HCT116 (cell line): ENCODE measurements at regions of chr2 and their contacts with region 1.

Region 1: GRCh38 chr2:17672583-17673317 is 80.9 kb downstream of the SMC6 start:
- DNase-seq: no peak
- ATAC-seq: peak; percentile 59; the same call in 1 of the 2 replicates
- H3K4me3 ChIP-seq: no peak overlapping the region
- H3K27ac ChIP-seq: no peak overlapping the region
- H3K4me1 ChIP-seq: 0 out of 4 replicates have a peak, but pooled peaks cover 0 to 3% of the 10 kb centered on the region in 2 experiments
- H3K27me3 ChIP-seq: no peaks in the 10 kb centered on the region
- CTCF ChIP-seq: peak in 1 of 3 experiments; percentile 12; a peak in 1 of 6 replicates
- POLR2A ChIP-seq: no peak
- RAD21 ChIP-seq: no peak

Region 2: DNA sequence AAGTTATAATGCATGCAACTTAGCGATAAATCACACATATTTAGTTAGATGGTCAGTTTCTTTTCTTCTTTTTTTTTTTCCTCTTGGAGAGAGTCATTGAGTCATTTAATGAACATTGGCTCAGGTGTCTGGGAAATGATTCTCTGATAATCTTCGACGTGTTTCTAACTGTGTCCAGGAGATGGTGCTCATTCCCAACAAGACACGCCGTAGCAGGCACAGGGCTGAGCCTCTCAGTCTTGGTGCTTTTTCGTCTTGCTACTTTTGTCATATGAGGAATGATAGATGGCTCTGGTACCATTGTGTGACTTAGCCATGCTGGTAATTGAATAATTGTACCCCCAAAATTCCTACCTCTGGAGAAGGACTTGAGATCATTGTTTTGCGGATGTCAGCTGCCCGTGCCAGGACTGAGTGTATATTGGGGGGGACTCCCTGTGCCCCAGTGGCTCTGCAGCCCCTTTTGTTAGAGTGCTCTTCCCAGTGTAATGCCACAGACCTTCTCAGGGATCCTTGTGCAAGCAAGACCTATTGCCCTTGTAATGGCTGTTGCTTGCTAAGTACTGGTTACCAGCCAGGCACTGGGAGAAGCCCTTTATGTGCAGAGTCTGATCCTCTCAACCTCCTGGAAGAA is 899.6 kb before region 1 on chr2:
- CTCF ChIA-PET with region 1: interaction called, 9 read pairs
- POLR2A ChIA-PET with region 1: no interaction called
- RAD21 ChIA-PET with region 1: interaction called in 1 of 2 experiments, 3 read pairs
- intact Hi-C with region 1: loop called (anchors 1 kb)
- DNase-seq: peak; percentile 36
- ATAC-seq: peak; percentile 89
- H3K4me3 ChIP-seq: no peak overlapping the region
- H3K27ac ChIP-seq: no peak overlapping the region
- H3K4me1 ChIP-seq: no peaks in the 10 kb centered on the region
- H3K27me3 ChIP-seq: peaks cover 33% of the 10 kb centered on the region
- CTCF ChIP-seq: peak; percentile 34 to 78 (median 67); a peak in 5 of 6 replicates
- POLR2A ChIP-seq: no peak
- RAD21 ChIP-seq: peak; percentile 87

Region 3: DNA sequence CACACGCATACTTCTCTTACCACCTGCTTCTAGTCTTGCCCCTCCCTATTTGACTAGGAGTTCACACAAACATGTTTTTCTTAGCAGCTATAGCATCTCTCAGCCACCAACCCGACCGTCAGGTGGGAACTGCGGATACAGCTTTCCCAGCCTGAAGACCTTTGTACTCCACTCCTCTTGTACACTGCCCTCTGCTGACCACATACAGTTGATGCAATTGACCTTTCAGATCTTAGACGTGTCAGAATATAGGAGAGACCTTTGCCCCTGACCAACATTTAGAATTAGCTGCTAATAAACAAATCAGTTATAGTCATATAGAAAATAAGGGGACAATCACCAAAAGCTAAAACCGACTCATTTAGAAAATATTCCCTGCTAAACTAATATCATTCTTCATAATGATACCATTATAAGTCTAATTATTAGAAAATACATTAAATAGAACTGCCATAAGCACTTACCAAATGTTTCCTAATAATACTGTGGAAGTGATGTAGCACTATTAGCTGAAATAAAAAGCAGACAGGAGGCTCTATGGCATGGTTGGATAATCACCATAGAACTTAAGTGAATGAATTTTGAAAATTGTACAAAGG is 362.9 kb before region 1 on chr2:
- CTCF ChIA-PET with region 1: interaction called, 20 read pairs
- POLR2A ChIA-PET with region 1: no interaction called
- RAD21 ChIA-PET with region 1: interaction called in 1 of 2 experiments, 5 read pairs
- intact Hi-C with region 1: loop called (anchors 2 kb)
- DNase-seq: peak; percentile 63
- ATAC-seq: peak; percentile 99
- H3K4me3 ChIP-seq: no peak overlapping the region
- H3K27ac ChIP-seq: no peak overlapping the region
- H3K4me1 ChIP-seq: no peaks in the 10 kb centered on the region
- H3K27me3 ChIP-seq: no peaks in the 10 kb centered on the region; the same call in 1 of the 2 replicates
- CTCF ChIP-seq: peak; percentile 49 to 79 (median 75); a peak in 5 of 6 replicates
- POLR2A ChIP-seq: no peak
- RAD21 ChIP-seq: peak; percentile 70

Region 4: GRCh38 chr2:17479875-17480274 is 192.9 kb before region 1 on chr2:
- CTCF ChIA-PET with region 1: interaction called, 14 read pairs
- POLR2A ChIA-PET with region 1: no interaction called
- RAD21 ChIA-PET with region 1: interaction called in 1 of 2 experiments, 5 read pairs
- intact Hi-C with region 1: no loop called
- DNase-seq: no peak
- ATAC-seq: 0 out of 2 replicates have a peak, but pooled peaks have one; percentile 20
- H3K4me3 ChIP-seq: no peak overlapping the region
- H3K27ac ChIP-seq: no peak overlapping the region
- H3K4me1 ChIP-seq: peaks cover 0 to 9% of the 10 kb centered on the region in 2 experiments; a peak in 1 of 4 replicates
- H3K27me3 ChIP-seq: no peaks in the 10 kb centered on the region
- CTCF ChIP-seq: no peak
- POLR2A ChIP-seq: no peak
- RAD21 ChIP-seq: peak; percentile 35; the same call in 1 of the 2 replicates

Region 5: GRCh38 chr2:17662723-17663122 is 10.0 kb before region 1 on chr2:
- CTCF ChIA-PET with region 1: interaction called, 14 read pairs
- POLR2A ChIA-PET with region 1: no interaction called
- RAD21 ChIA-PET with region 1: no interaction called
- intact Hi-C with region 1: no loop called
- DNase-seq: no peak
- ATAC-seq: no peak
- H3K4me3 ChIP-seq: no peak overlapping the region
- H3K27ac ChIP-seq: no peak overlapping the region
- H3K4me1 ChIP-seq: no peaks in the 10 kb centered on the region
- H3K27me3 ChIP-seq: no peaks in the 10 kb centered on the region
- CTCF ChIP-seq: no peak
- POLR2A ChIP-seq: no peak
- RAD21 ChIP-seq: no peak